ENCODE measurements at regions of chr17 and their contacts with region 1.

Region 1: GRCh38 chr17:15414532-15415306 is 52.7 kb downstream of the CDRT4 start:
- DNase-seq: peak; percentile 80
- ATAC-seq: peak; percentile 90

Region 2: DNA sequence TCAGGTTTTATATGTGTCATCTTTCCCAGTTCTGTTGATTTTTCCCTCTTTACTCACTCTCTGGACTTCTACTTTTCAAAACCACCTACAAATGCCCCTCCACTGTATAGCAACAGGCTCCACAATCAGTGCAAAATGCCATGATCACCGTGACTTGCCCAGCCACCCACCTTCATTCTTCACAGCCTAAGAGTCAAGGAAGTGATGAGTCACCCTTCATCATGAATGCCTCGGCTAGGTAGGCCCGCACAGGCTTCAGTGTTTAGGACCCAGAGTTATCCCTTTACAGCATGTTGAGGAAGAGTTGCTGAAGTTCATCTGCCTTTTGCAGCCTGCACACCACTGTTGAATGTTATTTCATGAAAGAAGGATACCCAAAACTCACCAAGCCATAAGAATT is 308.2 kb before region 1 on chr17:
- intact Hi-C with region 1: no loop called
- DNase-seq: no peak
- ATAC-seq: no peak

Region 3: GRCh38 chr17:15291674-15292361 is 122.9 kb before region 1 on chr17:
- intact Hi-C with region 1: loop called (anchors 2 kb)
- DNase-seq: no peak
- ATAC-seq: peak; percentile 71

Region 4: GRCh38 chr17:15436473-15437302 is 22.0 kb after region 1 on chr17:
- intact Hi-C with region 1: loop called (anchors 1 kb)
- DNase-seq: peak; percentile 78
- ATAC-seq: peak; percentile 66